Heart right ventricle (tissue), 16 donors: ENCODE measurements at regions of chr2 and their contacts with region 1.

Region 1: GRCh38 chr2:74876081-74876886 is 42.4 kb downstream of the HK2 start:
- DNase-seq: peak in 1 of 2 donors; percentile 27
- ATAC-seq: peak; percentile 65 to 85 (median 82)
- H3K4me3 ChIP-seq: no peak overlapping the region
- H3K27ac ChIP-seq: peak overlapping the region in 1 of 10 donors; percentile 83
- H3K4me1 ChIP-seq: peaks cover 0 to 46% (median 0%) of the 10 kb centered on the region in 9 donors
- H3K27me3 ChIP-seq: no peaks in the 10 kb centered on the region
- CTCF ChIP-seq: peak; percentile 49 to 79 (median 73)

Region 2: DNA sequence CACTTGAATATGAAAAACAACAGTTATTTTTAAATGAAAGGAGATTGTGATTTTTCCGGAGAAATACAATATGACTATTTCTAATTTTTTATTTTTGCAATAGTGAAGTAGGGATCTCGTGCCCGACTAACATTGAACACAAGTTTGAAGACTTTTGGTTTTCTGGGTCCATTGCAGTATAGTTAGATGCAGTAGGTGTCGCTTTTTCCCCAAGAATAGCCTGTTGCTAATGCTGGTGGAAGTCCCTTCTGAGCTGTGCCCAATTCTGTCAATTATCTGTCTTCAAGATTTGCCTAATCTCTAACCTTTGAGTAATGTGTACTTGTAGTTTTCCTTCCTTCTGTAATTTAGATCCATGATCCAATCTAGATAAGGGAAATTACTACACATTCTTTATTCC is 185.7 kb before region 1 on chr2:
- intact Hi-C with region 1: loop called in 9 of 10 experiments (anchors 2 to 5 kb)
- DNase-seq: peak in 1 of 2 donors; percentile 13
- ATAC-seq: peak in 6 of 8 donors; percentile 38 to 80 (median 54)
- H3K4me3 ChIP-seq: no peak overlapping the region
- H3K27ac ChIP-seq: no peak overlapping the region
- H3K4me1 ChIP-seq: peaks cover 0 to 3% (median 0%) of the 10 kb centered on the region in 9 donors
- H3K27me3 ChIP-seq: peaks cover 0 to 14% (median 0%) of the 10 kb centered on the region in 7 donors
- CTCF ChIP-seq: peak in 8 of 9 donors; percentile 18 to 78 (median 71)

Region 3: GRCh38 chr2:74715078-74715791 is 161.0 kb before region 1 on chr2:
- intact Hi-C with region 1: loop called (anchors 1 to 5 kb)
- DNase-seq: peak; percentile 78 to 79
- ATAC-seq: peak; percentile 89 to 98 (median 95)
- H3K4me3 ChIP-seq: peak overlapping the region; percentile 28 to 63 (median 57)
- H3K27ac ChIP-seq: peak overlapping the region in 2 of 10 donors; percentile 45
- H3K4me1 ChIP-seq: peaks cover 0 to 14% (median 4%) of the 10 kb centered on the region in 9 donors
- H3K27me3 ChIP-seq: peaks cover 0 to 39% (median 19%) of the 10 kb centered on the region in 7 donors
- CTCF ChIP-seq: peak; percentile 77 to 93 (median 89)